ENCODE measurements at regions of chr1 and their contacts with region 1.

Region 1: DNA sequence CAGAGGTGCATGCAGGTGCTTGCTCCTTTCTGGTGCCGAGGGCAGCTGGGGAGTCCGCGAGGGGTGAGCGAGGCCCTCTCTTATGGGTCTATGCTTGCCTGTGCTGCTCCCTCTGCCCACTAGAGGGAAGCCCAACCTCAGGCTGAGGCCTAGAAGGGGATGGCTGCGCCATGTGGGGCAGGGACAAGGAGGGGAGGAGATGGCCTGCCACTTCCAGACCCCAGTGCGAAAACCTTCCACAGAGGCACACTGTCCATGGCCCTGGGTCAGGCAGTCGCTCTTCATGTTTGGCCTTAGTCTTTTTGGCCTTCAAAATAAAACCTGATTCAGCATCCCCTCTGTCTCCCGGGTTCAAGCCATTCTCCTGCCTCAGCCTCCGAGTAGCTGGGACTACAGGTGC is 14.0 kb downstream of the RHBG start:
- DNase-seq: peak; percentile 32
- H3K4me3 ChIP-seq: no peak overlapping the region
- H3K27ac ChIP-seq: no peak overlapping the region
- H3K4me1 ChIP-seq: no peaks in the 10 kb centered on the region
- H3K27me3 ChIP-seq: peaks cover 6% of the 10 kb centered on the region
- CTCF ChIP-seq: peak in 3 of 4 experiments; percentile 33 to 76 (median 61)
- POLR2A ChIP-seq: no peak

Region 2: DNA sequence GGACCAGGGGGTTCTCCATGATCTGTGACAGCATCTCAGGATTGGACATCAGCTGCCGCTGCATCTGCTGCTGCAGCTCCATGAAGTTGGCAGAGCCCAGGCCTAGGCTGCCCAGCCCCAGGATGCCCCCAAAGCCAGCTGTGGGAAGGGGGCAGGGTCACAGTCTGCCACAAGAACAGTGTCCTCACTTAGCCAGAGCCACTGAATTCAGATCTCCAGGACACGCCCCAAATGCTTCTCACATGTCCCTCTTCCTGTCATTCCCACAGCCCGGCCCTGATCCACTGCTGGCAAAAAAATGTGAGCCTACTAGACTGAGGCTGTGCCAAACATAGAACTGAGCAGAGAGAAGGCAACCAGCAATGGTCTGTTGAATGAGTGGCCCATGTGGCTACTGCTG is 332.6 kb before region 1 on chr1:
- intact Hi-C with region 1: no loop called
- DNase-seq: no peak
- H3K4me3 ChIP-seq: no peak overlapping the region
- H3K27ac ChIP-seq: no peak overlapping the region
- H3K4me1 ChIP-seq: no peaks in the 10 kb centered on the region
- H3K27me3 ChIP-seq: no peaks in the 10 kb centered on the region
- CTCF ChIP-seq: no peak
- POLR2A ChIP-seq: no peak

Region 3: GRCh38 chr1:156445789-156446263 is 62.8 kb after region 1 on chr1:
- intact Hi-C with region 1: loop called (anchors 2 kb)
- DNase-seq: peak; percentile 53
- H3K4me3 ChIP-seq: no peak overlapping the region
- H3K27ac ChIP-seq: no peak overlapping the region
- H3K4me1 ChIP-seq: no peaks in the 10 kb centered on the region
- H3K27me3 ChIP-seq: peaks cover 6% of the 10 kb centered on the region
- CTCF ChIP-seq: peak; percentile 68 to 91 (median 90)
- POLR2A ChIP-seq: no peak

Region 4: DNA sequence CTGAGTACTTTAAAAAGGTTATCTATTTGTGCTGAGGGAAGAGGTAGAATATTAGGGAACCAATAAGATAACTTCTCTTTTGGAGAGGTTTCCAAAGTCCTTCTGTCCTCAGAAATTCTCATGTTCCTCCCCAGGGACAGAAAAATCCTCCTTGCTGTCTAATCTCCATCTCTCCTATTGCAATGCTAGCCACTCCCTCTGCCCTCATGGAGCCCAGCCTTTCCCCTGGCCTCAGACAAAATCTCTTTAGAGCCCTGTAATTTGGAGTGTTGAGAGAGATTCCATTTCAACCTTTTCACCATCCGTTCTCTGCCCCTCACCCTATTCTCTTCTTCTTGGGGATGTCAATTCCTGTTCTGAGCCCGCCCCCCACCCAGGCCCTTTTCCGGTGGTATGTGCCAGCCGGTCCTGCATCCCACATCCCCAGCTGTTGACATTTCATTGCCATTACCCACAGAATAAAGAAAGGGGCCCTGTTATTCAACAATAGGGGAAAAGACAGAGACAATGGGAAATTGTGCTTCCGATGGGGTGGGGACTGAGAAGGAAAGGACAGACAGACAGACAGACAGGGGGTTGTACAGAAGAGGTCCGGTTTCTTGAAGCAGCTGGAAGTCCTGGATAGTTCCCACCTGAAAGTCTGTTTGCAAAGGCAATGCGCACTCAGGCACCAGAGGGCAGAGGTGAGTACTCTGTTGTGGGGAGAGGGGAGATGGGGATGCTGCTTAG is 236.0 kb after region 1 on chr1 and contains the start of gene HAPLN2:
- intact Hi-C with region 1: loop called (anchors 10 kb)
- DNase-seq: no peak
- H3K4me3 ChIP-seq: no peak within 1 kb of the TSS
- H3K27ac ChIP-seq: no peak within 1 kb of the TSS
- H3K4me1 ChIP-seq: peaks cover 10% of the 10 kb centered on the region
- H3K27me3 ChIP-seq: no peaks in the 10 kb centered on the region
- CTCF ChIP-seq: peak in 1 of 4 experiments; percentile 12
- POLR2A ChIP-seq: no peak
- total RNA-seq, gene HAPLN2: 6.1 to 10.2 TPM

Measured in prostate gland (tissue), 2 donors.